ENCODE measurements at regions of chr4 and their contacts with region 1.

Region 1: DNA sequence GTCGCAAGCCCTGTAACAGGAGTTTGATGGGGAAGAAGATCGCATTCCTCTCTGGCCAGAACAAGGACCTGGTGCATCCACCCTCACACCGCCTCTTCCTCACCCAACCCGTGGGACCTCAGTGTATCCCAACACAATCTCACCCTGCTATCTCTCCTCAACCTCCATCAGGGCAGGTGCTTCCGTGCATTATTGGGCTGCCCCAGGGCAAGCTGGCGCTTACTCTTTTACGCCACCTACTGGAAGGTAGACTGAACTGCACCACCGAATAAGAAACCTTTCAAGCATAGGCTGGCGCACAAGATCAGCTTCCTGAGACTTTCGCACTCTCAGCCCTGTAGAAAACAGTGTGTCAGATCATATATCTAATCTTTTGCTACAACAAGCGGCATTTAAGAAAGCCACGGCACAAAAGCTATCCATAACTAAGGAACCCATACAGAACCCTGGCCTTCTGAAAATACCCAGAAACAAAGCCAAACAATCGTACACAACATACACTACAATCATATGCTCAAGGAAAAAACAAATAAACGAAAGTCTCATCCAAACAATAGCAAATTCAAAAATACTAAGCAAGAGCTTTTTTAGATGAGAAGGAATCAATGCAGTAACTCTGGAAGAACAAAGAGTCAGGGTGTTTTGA is 209.3 kb downstream of the UGT8 start:
- DNase-seq: peak; percentile 15 to 64
- H3K4me3 ChIP-seq: no peak overlapping the region
- H3K27ac ChIP-seq: no peak overlapping the region
- H3K4me1 ChIP-seq: no peaks in the 10 kb centered on the region
- H3K27me3 ChIP-seq: no peaks in the 10 kb centered on the region
- CTCF ChIP-seq: peak; percentile 72 to 95 (median 84)
- EP300 ChIP-seq: no peak
- POLR2A ChIP-seq: no peak
- RAD21 ChIP-seq: peak; percentile 84 to 88

Region 2: GRCh38 chr4:114257501-114257900 is 550.4 kb before region 1 on chr4:
- CTCF ChIA-PET with region 1: no interaction called
- POLR2A ChIA-PET with region 1: no interaction called
- DNase-seq: no peak
- H3K4me3 ChIP-seq: no peak overlapping the region
- H3K27ac ChIP-seq: no peak overlapping the region
- H3K4me1 ChIP-seq: no peaks in the 10 kb centered on the region
- H3K27me3 ChIP-seq: no peaks in the 10 kb centered on the region
- CTCF ChIP-seq: no peak
- EP300 ChIP-seq: no peak
- POLR2A ChIP-seq: no peak
- RAD21 ChIP-seq: no peak

Region 3: DNA sequence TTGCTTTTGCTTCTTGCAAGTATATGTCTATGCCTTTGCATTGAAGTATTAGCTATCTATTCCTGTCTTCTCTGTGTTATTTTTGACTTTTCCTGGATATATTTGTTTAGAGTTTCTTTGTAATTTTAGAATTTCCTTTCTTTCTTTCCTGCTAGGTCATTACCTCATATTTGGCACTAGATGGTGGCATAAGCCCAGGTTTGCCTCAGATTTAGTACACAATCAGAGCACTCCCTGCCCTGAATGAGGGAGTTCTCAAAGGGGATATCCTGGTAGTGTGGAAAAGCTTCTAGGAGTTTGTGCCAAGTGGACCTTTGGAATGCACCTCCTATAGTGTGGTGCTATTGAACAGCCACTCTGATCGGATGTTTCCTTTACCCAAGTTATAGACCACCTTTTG is 27.7 kb before region 1 on chr4:
- CTCF ChIA-PET with region 1: interaction called, 29 read pairs
- POLR2A ChIA-PET with region 1: no interaction called
- DNase-seq: no peak
- H3K4me3 ChIP-seq: no peak overlapping the region
- H3K27ac ChIP-seq: no peak overlapping the region
- H3K4me1 ChIP-seq: peaks cover 0 to 3% (median 0%) of the 10 kb centered on the region in 4 experiments; a peak in 2 of 7 replicates
- H3K27me3 ChIP-seq: no peaks in the 10 kb centered on the region
- CTCF ChIP-seq: peak in 2 of 3 experiments; percentile 58 to 60; a peak in 3 of 4 replicates
- EP300 ChIP-seq: no peak
- POLR2A ChIP-seq: no peak
- RAD21 ChIP-seq: peak; percentile 91 to 94

Region 4: GRCh38 chr4:114791976-114792375 is 15.9 kb before region 1 on chr4:
- CTCF ChIA-PET with region 1: interaction called, 26 read pairs
- POLR2A ChIA-PET with region 1: no interaction called
- DNase-seq: no peak
- H3K4me3 ChIP-seq: no peak overlapping the region
- H3K27ac ChIP-seq: no peak overlapping the region
- H3K4me1 ChIP-seq: no peaks in the 10 kb centered on the region; a peak in 1 of 7 replicates
- H3K27me3 ChIP-seq: no peaks in the 10 kb centered on the region
- CTCF ChIP-seq: no peak
- EP300 ChIP-seq: no peak
- POLR2A ChIP-seq: no peak
- RAD21 ChIP-seq: no peak